ENCODE measurements at regions of chr3 and their contacts with region 1.

Region 1: GRCh38 chr3:156743859-156744258 is 69.5 kb downstream of the TIPARP start:
- DNase-seq: no peak
- H3K4me3 ChIP-seq: no peak overlapping the region
- H3K27ac ChIP-seq: no peak overlapping the region
- H3K27me3 ChIP-seq: no peaks in the 10 kb centered on the region
- CTCF ChIP-seq: no peak

Region 2: DNA sequence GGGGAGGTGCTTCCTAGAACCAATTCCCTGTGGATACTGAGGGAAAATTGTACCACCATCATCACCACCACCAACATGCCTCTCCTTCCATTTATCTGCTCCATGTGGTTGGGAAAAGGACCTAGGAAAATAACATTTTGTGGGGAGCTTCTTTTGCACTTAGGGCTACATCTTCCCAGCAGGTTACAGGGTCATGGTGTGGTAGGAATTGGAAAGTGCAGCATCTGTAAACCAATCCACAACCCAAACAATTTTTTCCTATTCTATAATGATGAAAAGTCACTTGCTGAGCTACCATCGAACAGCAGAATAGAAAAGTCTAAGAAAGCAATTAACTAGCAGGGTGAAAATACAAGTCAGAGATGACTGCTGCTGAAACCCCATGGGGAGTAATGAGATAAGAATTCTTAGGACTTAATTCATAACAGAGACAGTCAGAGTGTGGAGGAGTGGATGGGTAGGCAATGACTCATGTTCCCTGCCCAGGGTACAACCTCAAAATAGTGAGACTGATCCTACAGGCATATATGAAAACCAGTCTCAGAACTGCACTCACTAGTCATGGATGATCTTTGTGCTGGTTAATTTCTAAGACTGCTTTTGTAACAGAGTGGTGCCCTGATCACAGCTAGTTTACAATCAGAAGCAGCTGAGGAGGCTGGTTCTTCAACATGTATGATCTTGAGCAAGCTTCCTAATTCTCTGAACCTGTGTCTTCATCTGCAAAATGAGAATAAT is 44.2 kb after region 1 on chr3:
- intact Hi-C with region 1: loop called in 1 of 2 experiments (anchors 5 kb)
- DNase-seq: no peak
- H3K4me3 ChIP-seq: no peak overlapping the region
- H3K27ac ChIP-seq: no peak overlapping the region
- H3K27me3 ChIP-seq: no peaks in the 10 kb centered on the region
- CTCF ChIP-seq: no peak